Posterior vena cava (tissue), 2 donors: ENCODE measurements at regions of chr10 and their contacts with region 1.

Region 1: DNA sequence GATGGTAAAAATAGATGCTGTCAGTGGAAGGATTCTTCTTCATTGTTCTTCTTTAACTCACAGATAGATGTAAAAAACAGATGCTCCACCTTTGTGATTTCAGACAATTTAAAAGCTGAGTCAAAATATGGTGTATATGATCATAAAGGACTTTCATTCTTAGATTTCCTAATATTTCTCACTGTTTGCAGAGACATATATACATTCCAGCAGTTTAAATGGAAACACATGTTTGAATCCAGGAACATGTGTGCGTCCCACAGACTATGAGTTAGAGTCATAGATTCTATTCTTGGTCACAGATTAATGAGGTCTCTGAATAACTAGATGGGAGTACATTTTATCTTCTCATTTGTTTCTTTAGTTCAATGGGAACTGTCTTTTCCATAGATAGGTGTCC is 109.6 kb downstream of the BICC1 start:
- DNase-seq: no peak

Region 2: GRCh38 chr10:57026307-57026706 is 1595.9 kb before region 1 on chr10:
- intact Hi-C with region 1: no loop called
- DNase-seq: no peak

Region 3: GRCh38 chr10:58608351-58608750 is 13.9 kb before region 1 on chr10:
- intact Hi-C with region 1: loop called in 1 of 2 experiments (anchors 1 kb)
- DNase-seq: no peak